Head of caudate nucleus (tissue), 42 donors: ENCODE measurements at regions of chr1 and their contacts with region 1.

Region 1: GRCh38 chr1:181189691-181190363 is 101.3 kb downstream of the IER5 start:
- DNase-seq: peak; percentile 33 to 89 (median 76)

Region 2: DNA sequence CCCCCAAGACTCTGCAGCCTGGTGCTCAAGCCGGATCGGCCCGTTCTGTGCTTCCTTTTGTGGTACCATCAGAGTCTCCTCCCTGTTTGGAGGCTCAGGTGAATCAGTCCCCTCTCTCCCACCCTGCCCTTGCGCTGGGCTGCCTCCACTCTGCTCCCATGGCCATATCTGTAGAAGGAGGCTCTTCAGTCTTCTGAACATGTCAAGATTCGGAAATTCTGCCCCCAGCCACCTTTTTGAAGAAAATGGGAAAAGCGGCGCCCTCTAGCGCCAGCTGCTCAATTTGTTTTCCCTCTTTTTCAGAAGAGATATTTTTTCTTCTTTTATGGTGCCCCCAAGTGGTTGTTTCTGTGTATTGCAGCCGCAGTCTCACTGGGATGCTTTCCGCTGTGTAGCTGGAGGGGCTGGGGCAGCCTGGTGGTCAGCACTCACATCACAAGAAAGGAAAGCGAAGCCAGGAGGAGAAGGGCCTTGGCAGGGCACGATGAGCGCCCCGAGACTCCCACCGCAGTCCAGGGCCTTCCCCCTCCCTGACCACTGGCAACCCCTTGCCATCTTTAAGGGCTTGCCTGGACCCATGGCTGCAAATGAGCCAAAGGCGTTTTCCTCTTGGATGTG is 235.1 kb after region 1 on chr1:
- intact Hi-C with region 1: loop called (anchors 1 kb)
- DNase-seq: peak; percentile 49 to 93 (median 83)